Right ventricle myocardium inferior (tissue), 1 donor: ENCODE measurements at regions of chr13 and their contacts with region 1.

Region 1: GRCh38 chr13:51729866-51730546 is 74.0 kb downstream of the DHRS12 start:
- DNase-seq: no peak
- ATAC-seq: peak; percentile 70

Region 2: GRCh38 chr13:51435002-51435578 is 294.9 kb before region 1 on chr13:
- intact Hi-C with region 1: loop called (anchors 5 kb)
- DNase-seq: no peak
- ATAC-seq: no peak

Region 3: GRCh38 chr13:51452361-51453206 is 277.4 kb before region 1 on chr13 and contains the start of gene INTS6:
- intact Hi-C with region 1: loop called (anchors 5 kb)
- DNase-seq: peak; percentile 100
- ATAC-seq: peak; percentile 95
- total RNA-seq, gene INTS6: 22.7 TPM

Region 4: GRCh38 chr13:51583875-51584730 is 145.9 kb before region 1 on chr13 and contains the start of gene WDFY2:
- intact Hi-C with region 1: loop called (anchors 2 kb)
- DNase-seq: peak; percentile 99
- ATAC-seq: peak; percentile 96
- total RNA-seq, gene WDFY2: 4.7 TPM

Region 5: DNA sequence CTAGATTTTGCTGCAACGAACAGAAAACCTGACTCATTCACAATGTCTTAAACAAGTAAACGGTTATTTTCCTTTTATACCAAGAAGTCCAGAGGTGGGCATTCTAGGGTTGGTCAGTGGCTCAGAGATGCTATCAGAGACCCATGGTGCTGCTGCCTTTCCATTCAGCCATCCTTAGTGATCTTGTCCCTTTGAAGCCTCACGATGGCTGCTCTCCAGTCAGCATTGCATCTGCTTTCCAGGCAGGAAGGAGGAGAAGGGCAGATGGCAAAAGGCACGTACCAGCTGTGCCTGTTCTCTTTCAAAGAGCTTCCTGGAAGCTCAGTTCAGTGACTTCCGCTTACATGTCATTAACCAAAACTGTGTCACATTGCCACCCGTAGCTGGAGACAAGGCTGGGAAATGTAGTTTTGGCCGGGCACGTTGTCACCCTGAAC is 115.6 kb before region 1 on chr13:
- intact Hi-C with region 1: loop called (anchors 10 kb)
- DNase-seq: no peak
- ATAC-seq: peak; percentile 71

Region 6: DNA sequence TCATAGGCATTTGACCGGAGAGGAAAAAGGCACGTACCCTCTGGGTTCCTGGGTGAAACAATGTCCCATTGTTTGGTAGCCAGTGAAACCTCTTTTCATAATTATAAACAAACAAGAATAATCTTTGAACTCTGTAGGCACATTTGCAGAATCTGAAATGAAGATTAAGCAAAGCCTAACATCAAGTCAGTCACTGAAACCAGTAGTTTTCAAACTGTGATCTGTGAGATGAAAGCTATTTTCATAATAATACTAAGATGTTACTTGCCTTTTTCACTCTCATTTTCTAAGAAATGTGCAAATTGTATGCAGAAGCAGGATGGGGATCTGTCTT is 40.4 kb before region 1 on chr13:
- intact Hi-C with region 1: no loop called
- DNase-seq: no peak
- ATAC-seq: no peak